ENCODE measurements at regions of chr5 and their contacts with region 1.

Region 1: DNA sequence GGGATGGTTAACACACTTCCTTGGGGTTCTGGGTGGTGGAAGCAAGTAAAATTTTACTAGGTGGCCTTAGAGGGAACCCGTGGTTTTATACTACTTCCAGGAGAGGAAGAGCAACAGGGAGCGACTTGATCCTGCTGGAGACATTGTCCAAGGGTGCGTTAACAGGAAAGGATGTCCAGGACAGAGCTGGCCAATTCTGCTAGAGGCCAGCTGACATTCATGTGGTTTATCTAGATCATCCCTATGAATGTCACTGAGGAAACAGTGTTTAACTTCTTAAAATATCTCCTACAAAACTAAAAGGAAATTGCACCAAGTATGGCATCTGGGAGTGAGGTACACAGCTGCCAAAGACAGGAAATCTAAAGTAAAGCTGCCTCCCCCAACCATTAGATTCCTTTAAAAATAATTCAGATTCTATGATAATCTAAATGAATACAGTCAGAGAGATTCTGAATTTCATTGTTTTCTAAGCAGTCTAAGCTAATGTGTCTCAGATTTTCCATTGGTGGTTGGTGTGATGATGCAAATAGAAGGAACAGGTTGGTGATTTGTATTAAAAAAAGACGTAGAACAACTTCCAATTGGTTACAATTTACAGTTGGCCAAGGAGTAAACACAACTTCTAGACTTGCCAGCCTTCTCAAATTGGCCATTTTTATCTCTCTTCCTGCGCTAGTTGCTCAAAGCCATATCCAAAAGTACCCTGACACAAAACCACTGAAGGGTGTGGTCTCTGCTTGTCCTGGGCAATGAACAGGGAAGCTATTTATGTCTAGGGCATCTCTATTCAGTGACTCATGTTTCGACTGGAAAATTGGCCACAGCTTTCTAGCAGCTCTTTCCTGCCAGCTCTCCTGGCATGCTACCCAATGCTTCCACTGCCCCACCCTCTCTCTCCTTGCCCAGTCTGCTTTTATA is 574.7 kb upstream of the MEF2C start:
- DNase-seq: peak; percentile 76
- H3K4me3 Mint-ChIP-seq: no peak overlapping the region
- H3K27ac Mint-ChIP-seq: peak overlapping the region; percentile 25
- H3K4me1 Mint-ChIP-seq: peaks cover 10% of the 10 kb centered on the region
- H3K27me3 Mint-ChIP-seq: no peaks in the 10 kb centered on the region
- CTCF ChIP-seq: no peak

Region 2: DNA sequence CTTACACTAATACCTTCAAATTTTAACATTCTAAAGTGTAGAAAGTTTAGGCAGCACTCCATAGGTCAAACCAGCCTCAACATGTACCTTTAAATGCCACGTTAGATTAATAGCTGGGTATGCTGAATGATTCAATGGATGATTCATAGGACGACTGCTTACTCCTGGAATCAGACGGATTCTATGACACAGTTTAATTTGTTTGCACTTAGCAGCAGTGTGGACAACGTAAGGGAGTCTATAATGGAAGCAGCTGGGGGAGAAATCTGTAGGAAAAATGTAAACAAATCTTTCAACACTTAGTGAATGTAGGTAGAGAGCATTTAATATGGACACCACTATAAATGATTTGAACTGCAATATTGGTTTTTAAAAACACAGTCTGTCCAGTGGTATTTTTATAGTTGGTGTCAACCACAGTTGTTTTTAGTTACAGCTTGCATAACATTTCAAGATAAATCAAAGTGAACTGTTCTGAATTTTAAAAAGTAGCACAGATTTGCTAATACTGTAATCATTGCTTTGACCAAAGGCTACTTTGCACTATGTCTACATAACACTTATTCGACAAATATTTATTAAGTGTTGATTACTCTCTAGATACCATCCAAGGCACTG is 126.8 kb after region 1 on chr5:
- CTCF ChIA-PET with region 1: no interaction called
- POLR2A ChIA-PET with region 1: no interaction called
- intact Hi-C with region 1: loop called (anchors 10 kb)
- DNase-seq: peak; percentile 69
- H3K4me3 Mint-ChIP-seq: peak overlapping the region; percentile 13
- H3K27ac Mint-ChIP-seq: peak overlapping the region; percentile 90
- H3K4me1 Mint-ChIP-seq: peaks cover 14% of the 10 kb centered on the region
- H3K27me3 Mint-ChIP-seq: no peaks in the 10 kb centered on the region
- CTCF ChIP-seq: no peak

Region 3: DNA sequence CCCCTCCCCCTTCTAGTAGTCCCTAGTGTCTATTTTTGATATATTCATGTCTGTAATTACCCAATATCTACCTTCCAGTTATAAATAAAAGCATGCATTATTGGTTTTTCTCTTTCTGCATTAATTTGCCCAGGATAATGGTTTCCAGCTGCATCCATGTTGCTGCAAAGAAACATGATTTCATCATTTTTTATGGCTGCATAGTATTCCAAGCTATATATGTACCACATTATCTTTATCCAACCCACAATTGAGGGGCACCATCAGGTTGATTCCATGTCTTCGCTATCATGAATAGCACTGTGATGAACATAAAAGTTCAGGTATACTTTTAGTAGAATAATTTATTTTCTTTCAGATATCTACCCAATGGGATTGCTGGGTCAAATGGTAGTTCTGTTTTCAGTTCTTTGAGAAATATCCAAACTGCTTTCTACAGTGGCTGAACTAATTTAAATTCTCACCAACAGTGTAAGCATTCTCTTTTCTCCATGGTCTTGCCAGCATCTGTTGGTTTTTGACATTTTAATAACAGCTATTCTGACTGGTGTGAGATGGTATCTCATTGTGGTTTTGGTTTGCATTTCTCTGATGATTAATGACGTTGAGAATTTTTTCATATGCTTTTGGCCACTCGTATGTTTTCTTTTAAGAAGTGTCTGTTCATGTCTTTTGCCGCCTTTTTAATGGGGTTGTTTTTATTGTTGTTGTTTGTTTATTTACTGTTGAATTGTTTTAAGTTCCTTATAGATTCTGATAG is 171.4 kb after region 1 on chr5:
- CTCF ChIA-PET with region 1: no interaction called
- POLR2A ChIA-PET with region 1: no interaction called
- intact Hi-C with region 1: no loop called
- DNase-seq: no peak
- H3K4me3 Mint-ChIP-seq: no peak overlapping the region
- H3K27ac Mint-ChIP-seq: no peak overlapping the region
- H3K4me1 Mint-ChIP-seq: no peaks in the 10 kb centered on the region
- H3K27me3 Mint-ChIP-seq: no peaks in the 10 kb centered on the region
- CTCF ChIP-seq: no peak

Measured in MCF 10A (cell line).